A549 (cell line): ENCODE measurements at regions of chr6 and their contacts with region 1.

Region 1: DNA sequence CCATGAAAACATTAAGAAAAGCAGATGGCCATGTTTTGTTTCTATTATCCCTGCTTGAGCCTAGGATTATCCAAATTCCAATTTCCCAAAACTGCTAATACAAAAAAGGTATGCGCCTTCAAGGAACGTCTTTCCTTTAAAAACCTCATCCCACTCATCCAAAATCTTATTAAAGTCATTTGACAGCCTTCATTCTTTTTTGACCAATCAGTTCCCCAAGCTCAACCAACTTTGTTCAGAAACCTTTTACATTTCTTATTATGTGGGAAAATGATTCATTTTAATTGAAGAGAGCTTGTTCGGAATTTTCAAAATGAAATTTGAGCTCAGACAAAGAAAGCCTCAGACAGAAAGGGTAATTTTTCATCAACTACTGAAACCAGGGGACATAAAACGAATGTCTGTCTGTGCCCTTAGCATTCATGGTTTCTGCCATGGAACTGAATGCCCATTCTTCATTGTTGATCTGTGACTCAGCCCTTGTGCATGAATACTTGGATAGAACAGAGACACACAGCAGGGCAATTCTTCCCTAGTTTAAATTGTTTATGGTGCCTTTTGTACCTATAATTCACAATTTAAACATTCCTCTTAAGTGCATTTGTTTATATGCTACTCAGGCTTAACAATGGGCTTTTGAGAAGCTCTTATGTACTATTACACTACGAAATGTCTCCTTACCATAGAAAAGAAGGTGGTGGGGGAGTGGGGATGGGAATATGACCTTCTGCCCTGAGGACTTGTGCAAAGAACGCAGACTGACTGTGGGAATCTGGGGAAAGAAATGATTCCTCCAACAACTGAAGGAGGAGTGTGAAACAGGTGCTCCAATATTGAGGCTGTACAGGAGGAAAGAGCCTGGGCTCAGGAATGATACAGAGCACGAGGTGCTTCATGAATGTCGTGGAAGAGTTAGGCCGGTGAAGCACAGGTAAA is 49.8 kb upstream of the ERVFRD-1 start:
- DNase-seq: no peak
- ATAC-seq: peak in 1 of 2 experiments; percentile 34; a peak in 1 of 6 replicates
- H3K4me3 ChIP-seq: no peak overlapping the region
- H3K27ac ChIP-seq: peak overlapping the region in 1 of 2 experiments; percentile 48; a peak in 2 of 6 replicates
- H3K4me1 ChIP-seq: peaks cover 9% of the 10 kb centered on the region
- CTCF ChIP-seq: no peak
- EP300 ChIP-seq: no peak
- POLR2A ChIP-seq: no peak
- RAD21 ChIP-seq: no peak

Region 2: DNA sequence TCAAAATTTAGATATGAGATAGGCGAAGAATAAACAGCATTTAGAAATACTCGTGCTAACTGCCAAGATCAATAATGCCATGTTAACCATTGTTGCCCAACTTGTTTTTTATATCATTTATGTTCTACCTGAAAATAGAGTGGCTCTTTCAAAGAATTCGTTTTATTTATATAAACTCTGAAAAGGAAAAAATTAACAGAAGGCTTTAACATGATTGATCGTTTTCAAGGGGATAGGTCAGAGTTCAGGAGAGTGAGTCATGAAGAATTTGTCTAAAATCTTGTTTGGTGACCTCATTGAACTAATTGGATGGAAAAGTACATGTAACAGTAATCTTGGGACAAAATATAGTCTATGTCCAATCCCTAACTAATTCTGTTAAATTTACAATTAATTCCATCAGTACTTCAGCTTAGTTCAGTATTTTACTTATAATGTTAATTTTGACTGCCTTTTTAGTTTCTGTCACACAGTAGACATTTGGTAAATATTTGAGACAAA is 106.1 kb before region 1 on chr6:
- CTCF ChIA-PET with region 1: no interaction called
- POLR2A ChIA-PET with region 1: no interaction called
- DNase-seq: peak in 1 of 2 experiments; percentile 52
- ATAC-seq: no peak
- H3K4me3 ChIP-seq: no peak overlapping the region
- H3K27ac ChIP-seq: no peak overlapping the region
- H3K4me1 ChIP-seq: peaks cover 18% of the 10 kb centered on the region
- CTCF ChIP-seq: no peak
- EP300 ChIP-seq: no peak
- POLR2A ChIP-seq: no peak
- RAD21 ChIP-seq: no peak

Region 3: GRCh38 chr6:11172501-11173332 is 11.4 kb after region 1 on chr6:
- CTCF ChIA-PET with region 1: interaction called, 14 read pairs
- POLR2A ChIA-PET with region 1: no interaction called
- DNase-seq: peak in 1 of 2 experiments; percentile 64
- ATAC-seq: peak; percentile 54 to 84; a peak in 4 of 6 replicates
- H3K4me3 ChIP-seq: no peak overlapping the region
- H3K27ac ChIP-seq: peak overlapping the region; percentile 69 to 83
- H3K4me1 ChIP-seq: peaks cover 10% of the 10 kb centered on the region
- CTCF ChIP-seq: peak; percentile 63
- EP300 ChIP-seq: no peak
- POLR2A ChIP-seq: no peak
- RAD21 ChIP-seq: peak; percentile 48 to 67; a peak in 4 of 5 replicates